H1 (cell line): ENCODE measurements at regions of chr9 and their contacts with region 1.

Region 1: GRCh38 chr9:86809759-86810368 is 137.4 kb downstream of the GAS1 start:
- DNase-seq: no peak
- H3K4me3 ChIP-seq: no peak overlapping the region
- H3K27ac ChIP-seq: no peak overlapping the region
- H3K4me1 ChIP-seq: peaks cover 0 to 10% (median 5%) of the 10 kb centered on the region in 4 experiments; a peak in 5 of 7 replicates
- H3K27me3 ChIP-seq: no peaks in the 10 kb centered on the region; a peak in 1 of 7 replicates
- CTCF ChIP-seq: no peak
- EP300 ChIP-seq: no peak
- POLR2A ChIP-seq: no peak
- RAD21 ChIP-seq: no peak

Region 2: DNA sequence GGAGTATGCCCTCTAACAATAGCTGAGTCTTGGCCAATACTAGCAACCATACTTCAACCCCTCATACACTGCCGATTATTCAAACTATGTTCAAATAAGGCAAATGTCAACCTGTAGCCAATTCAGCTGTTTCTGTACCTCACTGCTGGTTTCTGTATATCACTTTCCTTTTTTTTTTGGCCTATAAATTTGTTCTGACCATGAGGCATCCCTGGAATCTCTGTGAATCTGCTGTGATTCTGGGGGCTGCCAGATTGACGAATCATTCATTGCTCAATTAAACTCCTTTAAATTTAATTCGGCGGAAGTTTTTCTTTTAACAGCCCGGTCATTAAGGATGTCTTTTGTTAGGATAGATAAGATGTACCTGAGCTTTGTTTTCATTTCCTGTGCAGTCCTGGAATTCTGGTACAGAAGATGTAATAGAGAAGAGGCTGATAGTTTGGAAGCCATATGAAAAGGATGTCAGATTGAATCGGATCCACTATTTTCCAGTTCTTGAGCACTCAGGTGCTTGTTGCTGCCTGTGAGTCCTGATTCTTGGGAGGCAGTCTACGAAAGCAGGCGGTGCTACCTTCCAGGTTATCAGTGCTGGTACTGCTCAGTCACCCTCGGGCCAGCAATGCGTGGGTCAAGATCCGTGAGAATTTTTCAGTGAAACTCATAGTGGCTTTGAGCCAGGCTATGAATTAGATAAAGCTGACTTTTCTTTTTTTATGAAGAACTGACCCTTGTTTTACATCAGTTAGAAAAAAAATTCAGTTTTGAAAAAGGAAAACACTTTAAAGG is 349.5 kb before region 1 on chr9:
- CTCF ChIA-PET with region 1: no interaction called
- POLR2A ChIA-PET with region 1: no interaction called
- DNase-seq: no peak
- H3K4me3 ChIP-seq: no peak overlapping the region
- H3K27ac ChIP-seq: no peak overlapping the region
- H3K4me1 ChIP-seq: no peaks in the 10 kb centered on the region
- H3K27me3 ChIP-seq: no peaks in the 10 kb centered on the region
- CTCF ChIP-seq: no peak
- EP300 ChIP-seq: no peak
- POLR2A ChIP-seq: no peak
- RAD21 ChIP-seq: no peak

Region 3: GRCh38 chr9:86795823-86796553 is 13.9 kb before region 1 on chr9:
- CTCF ChIA-PET with region 1: interaction called, 15 read pairs
- POLR2A ChIA-PET with region 1: no interaction called
- DNase-seq: no peak
- H3K4me3 ChIP-seq: no peak overlapping the region
- H3K27ac ChIP-seq: no peak overlapping the region
- H3K4me1 ChIP-seq: peaks cover 4 to 17% (median 8%) of the 10 kb centered on the region in 4 experiments
- H3K27me3 ChIP-seq: no peaks in the 10 kb centered on the region
- CTCF ChIP-seq: peak in 1 of 3 experiments; percentile 9; a peak in 1 of 4 replicates
- EP300 ChIP-seq: no peak
- POLR2A ChIP-seq: no peak
- RAD21 ChIP-seq: peak in 1 of 2 experiments; percentile 1; a peak in 1 of 4 replicates

Region 4: DNA sequence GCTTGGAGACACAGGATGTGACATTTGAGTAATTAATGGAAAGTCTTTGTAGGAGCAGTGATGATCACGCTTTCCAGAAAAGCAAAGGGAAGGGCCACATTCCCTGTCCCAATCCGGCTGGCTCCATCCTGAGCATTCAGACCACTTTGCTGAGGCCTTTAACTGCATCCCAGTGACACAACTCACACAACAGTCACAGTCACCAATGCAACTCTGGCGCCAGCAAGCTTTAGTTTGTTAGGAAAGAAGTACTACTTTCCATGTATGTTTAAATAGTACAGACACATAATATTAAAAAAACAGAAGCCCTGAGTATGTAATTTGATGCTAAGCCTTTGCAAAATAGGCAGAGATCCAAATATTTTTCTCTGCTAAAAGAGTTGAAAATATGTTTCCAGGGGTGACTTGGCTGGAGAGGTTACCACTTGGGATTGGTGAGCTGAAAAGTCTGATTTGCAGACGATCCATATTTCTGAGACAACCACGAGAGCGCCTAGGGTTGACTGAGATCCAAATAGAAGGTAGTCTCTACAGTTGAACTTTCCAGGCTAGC is 169.1 kb after region 1 on chr9:
- CTCF ChIA-PET with region 1: no interaction called
- POLR2A ChIA-PET with region 1: no interaction called
- DNase-seq: no peak
- H3K4me3 ChIP-seq: no peak overlapping the region
- H3K27ac ChIP-seq: no peak overlapping the region
- H3K4me1 ChIP-seq: no peaks in the 10 kb centered on the region
- H3K27me3 ChIP-seq: no peaks in the 10 kb centered on the region
- CTCF ChIP-seq: no peak
- EP300 ChIP-seq: no peak
- POLR2A ChIP-seq: no peak
- RAD21 ChIP-seq: no peak